Activated CD8-positive, alpha-beta T cell treated with anti-CD3 and anti-CD28 coated beads for 36 hours (primary cell): ENCODE measurements at regions of chr11 and their contacts with region 1.

Region 1: DNA sequence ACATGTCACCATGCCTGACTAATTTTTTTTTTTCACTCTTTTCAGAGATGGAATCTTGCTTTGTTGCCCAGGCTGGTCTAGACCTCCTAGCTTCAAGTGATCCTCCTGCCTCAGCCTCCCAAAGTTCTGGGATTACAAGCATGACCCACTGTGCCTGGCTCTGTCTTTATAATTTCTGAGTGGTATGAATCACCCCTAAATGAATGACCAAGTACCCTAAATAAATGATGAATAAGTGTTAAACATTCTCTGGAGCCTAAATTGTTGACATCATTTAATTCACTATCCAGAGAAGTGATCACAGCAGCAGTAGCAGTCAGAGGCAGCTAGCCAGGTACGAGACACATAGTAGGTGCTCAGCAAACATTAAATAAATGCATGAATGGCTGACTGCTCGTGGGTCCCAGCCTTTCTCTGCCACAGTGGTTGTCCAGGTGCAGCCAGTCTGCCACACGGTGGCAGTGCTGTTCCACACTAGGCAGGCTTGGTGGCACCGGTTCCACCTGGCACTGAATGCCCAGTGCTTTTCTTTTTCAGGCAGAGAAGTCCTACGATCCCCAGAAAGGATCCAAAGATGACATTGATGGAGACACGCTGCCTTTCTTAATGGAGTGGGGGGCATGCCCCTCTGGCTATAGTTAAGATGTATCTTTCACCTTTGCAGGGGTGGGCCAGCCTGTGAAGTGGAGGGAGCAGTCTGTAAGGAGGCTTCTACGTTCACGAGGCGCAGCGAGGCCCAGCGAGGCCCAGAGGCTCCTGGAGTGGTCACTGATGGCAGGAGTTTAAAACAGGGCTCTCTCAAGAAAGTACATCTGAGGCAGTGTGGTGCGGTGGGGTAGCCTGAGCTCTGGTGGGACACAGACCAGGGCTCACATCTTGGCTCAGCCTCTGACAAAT is 8.7 kb upstream of the TTC12 start:
- DNase-seq: peak; percentile 80
- ATAC-seq: peak; percentile 91
- H3K4me3 Mint-ChIP-seq: no peak overlapping the region
- H3K27ac Mint-ChIP-seq: no peak overlapping the region
- H3K4me1 Mint-ChIP-seq: no peaks in the 10 kb centered on the region
- H3K27me3 Mint-ChIP-seq: peaks cover 4% of the 10 kb centered on the region
- CTCF ChIP-seq: peak; percentile 89

Region 2: GRCh38 chr11:113278925-113279324 is 26.8 kb before region 1 on chr11:
- CTCF ChIA-PET with region 1: no interaction called
- POLR2A ChIA-PET with region 1: no interaction called
- intact Hi-C with region 1: no loop called
- DNase-seq: no peak
- ATAC-seq: no peak
- H3K4me3 Mint-ChIP-seq: no peak overlapping the region
- H3K27ac Mint-ChIP-seq: no peak overlapping the region
- H3K4me1 Mint-ChIP-seq: no peaks in the 10 kb centered on the region
- H3K27me3 Mint-ChIP-seq: no peaks in the 10 kb centered on the region
- CTCF ChIP-seq: no peak

Region 3: DNA sequence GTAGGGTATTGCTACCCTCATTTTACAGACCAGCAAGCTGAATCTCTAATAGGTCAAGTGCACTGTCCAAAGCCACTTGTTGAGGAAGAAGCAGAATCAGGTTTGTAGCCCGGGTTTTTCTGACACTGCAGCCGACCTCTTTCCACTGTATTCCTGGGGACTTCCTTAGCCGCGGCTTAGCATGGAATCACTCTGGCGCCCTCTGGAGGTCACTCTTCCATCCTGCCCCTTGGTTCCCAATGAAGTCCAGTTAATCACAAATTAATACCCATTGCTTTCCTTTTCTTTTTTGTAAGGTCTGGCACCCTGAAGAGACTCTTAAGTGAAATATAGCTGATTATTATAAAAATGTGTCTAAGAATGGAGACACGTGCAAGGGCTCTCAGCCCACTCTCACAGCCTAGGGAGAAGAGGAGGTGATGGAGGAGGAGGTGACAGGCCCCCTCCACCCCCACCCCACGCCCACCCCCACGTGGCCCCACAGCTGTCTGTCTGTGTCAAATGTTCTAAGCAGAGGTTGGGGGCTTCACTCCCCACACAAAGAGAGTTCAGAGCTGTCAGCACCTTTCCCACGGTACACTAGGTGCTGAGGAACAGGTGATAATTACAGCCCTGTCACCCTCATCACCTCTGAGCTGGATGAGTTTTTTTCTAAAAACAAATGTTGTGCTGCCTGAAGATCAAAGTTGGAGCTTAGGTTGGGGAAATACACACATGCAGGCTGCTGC is 227.2 kb after region 1 on chr11:
- CTCF ChIA-PET with region 1: interaction called, 5 read pairs
- POLR2A ChIA-PET with region 1: no interaction called
- intact Hi-C with region 1: loop called (anchors 2 kb)
- DNase-seq: peak; percentile 71
- ATAC-seq: peak; percentile 39
- H3K4me3 Mint-ChIP-seq: no peak overlapping the region
- H3K27ac Mint-ChIP-seq: no peak overlapping the region
- H3K4me1 Mint-ChIP-seq: no peaks in the 10 kb centered on the region
- H3K27me3 Mint-ChIP-seq: peaks cover 27% of the 10 kb centered on the region
- CTCF ChIP-seq: peak; percentile 80